ENCODE measurements at regions of chr11 and their contacts with region 1.

Region 1: DNA sequence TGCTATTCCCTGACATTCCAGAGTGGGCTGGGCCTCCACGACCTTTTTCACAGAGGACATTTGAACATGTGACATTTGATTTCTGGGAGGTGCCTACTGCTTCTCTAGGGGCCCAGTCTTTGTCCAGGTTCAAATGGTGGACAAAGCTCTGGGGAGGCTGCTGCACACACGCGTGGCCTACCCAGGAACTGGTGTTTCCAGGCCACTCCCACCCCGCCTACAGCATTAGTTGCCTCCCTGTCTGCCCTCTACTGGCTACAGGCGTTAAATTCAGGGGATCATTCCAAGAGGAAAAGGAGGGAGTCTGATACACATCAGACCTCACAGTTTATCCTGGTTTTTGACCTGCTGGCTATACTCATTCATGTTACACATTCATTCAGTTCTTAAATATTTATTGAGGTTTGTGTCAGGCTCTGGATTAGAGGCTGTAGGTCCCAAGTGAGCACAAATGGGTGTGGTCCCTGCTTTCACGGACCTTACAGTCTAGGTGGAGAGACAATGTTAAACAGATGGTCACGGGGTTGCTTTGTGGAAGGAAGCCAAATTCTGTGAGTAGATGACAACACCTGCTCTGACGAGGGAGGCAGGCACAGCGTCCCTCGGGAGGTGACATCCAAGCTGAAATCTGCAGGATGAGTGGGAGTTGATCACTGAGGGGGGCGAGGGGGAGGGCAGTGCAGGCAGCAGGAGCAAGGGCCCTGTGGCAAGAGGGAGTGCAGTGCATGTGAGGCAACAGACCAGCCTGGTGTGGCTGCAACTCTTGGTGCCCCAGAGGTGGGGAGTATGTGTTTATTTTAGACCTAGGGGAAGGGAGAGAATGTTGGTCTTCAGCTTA is 11.8 kb downstream of the TUB start:
- DNase-seq: peak; percentile 61 to 89 (median 79)
- H3K4me3 ChIP-seq: no peak overlapping the region
- H3K27ac ChIP-seq: peak overlapping the region in 1 of 5 donors; percentile 38
- H3K4me1 ChIP-seq: peaks cover 0 to 6% of the 10 kb centered on the region in 2 donors
- H3K27me3 ChIP-seq: no peaks in the 10 kb centered on the region
- CTCF ChIP-seq: peak; percentile 51 to 77 (median 70)
- POLR2A ChIP-seq: no peak

Region 2: GRCh38 chr11:7869467-7869866 is 223.3 kb before region 1 on chr11:
- intact Hi-C with region 1: no loop called
- DNase-seq: no peak
- H3K4me3 ChIP-seq: no peak overlapping the region
- H3K27ac ChIP-seq: no peak overlapping the region
- H3K4me1 ChIP-seq: no peaks in the 10 kb centered on the region
- H3K27me3 ChIP-seq: no peaks in the 10 kb centered on the region
- CTCF ChIP-seq: no peak
- POLR2A ChIP-seq: no peak

Region 3: GRCh38 chr11:8006349-8006977 is 86.3 kb before region 1 on chr11:
- intact Hi-C with region 1: loop called (anchors 5 kb)
- DNase-seq: peak; percentile 69 to 89 (median 73)
- H3K4me3 ChIP-seq: no peak overlapping the region
- H3K27ac ChIP-seq: no peak overlapping the region
- H3K4me1 ChIP-seq: no peaks in the 10 kb centered on the region
- H3K27me3 ChIP-seq: no peaks in the 10 kb centered on the region
- CTCF ChIP-seq: peak; percentile 61 to 94 (median 90)
- POLR2A ChIP-seq: peak in 1 of 2 donors; percentile 39

Region 4: GRCh38 chr11:8011981-8012444 is 80.8 kb before region 1 on chr11:
- intact Hi-C with region 1: loop called (anchors 5 kb)
- DNase-seq: peak in 1 of 7 donors; percentile 52
- H3K4me3 ChIP-seq: no peak overlapping the region
- H3K27ac ChIP-seq: no peak overlapping the region
- H3K4me1 ChIP-seq: no peaks in the 10 kb centered on the region
- H3K27me3 ChIP-seq: no peaks in the 10 kb centered on the region
- CTCF ChIP-seq: no peak
- POLR2A ChIP-seq: no peak

Region 5: GRCh38 chr11:8138526-8138925 is 45.7 kb after region 1 on chr11:
- intact Hi-C with region 1: no loop called
- DNase-seq: no peak
- H3K4me3 ChIP-seq: no peak overlapping the region
- H3K27ac ChIP-seq: no peak overlapping the region
- H3K4me1 ChIP-seq: no peaks in the 10 kb centered on the region
- H3K27me3 ChIP-seq: no peaks in the 10 kb centered on the region
- CTCF ChIP-seq: no peak
- POLR2A ChIP-seq: no peak

Region 6: GRCh38 chr11:8156877-8157276 is 64.1 kb after region 1 on chr11:
- intact Hi-C with region 1: no loop called
- DNase-seq: no peak
- H3K4me3 ChIP-seq: no peak overlapping the region
- H3K27ac ChIP-seq: no peak overlapping the region
- H3K4me1 ChIP-seq: peaks cover 7 to 16% of the 10 kb centered on the region in 2 donors
- H3K27me3 ChIP-seq: no peaks in the 10 kb centered on the region
- CTCF ChIP-seq: no peak
- POLR2A ChIP-seq: no peak

Measured in adrenal gland (tissue), 19 donors.